Activated B cell treated with CpG ODN at 0.5 μM for 24 hours (primary cell): ENCODE measurements at regions of chr2 and their contacts with region 1.

Region 1: DNA sequence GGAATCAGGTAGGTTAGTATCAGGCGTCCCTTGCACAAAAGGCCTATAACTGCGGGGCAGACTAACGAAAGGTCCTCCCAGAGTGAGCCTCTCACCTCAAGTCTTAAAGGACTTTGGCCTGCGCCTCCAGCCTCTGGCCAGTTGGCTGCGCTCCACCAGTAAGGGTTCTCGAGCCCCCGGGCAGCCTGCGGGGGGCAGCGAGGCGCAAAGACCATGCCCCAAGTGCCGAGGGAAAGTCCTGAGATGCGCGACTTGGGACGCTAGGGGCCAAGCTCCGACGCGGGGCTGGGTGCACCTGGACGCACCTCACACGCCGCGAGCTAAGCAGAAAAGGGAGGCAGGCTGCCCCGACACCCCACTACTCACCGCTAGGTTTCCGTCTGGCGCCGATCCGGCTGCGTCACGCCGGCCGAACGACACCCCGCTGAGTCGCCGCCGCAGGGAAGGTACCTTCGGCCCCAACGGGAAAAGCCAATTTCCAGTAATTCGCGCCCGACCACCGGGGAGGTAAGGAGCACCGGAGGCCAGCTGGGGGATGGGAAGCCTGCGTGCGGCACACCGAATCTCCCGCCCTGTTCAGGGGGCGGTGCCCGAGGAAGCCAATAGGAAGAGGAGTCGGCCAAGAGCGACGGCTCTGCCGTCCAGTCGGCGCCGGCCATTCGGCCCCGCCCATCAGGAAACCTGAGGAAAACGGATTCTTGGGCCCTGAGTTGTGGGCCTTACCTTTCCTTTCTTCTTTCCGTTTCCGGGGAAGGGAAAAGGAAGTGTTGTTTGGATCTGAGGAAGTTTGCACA is at the start of gene ORC2:
- DNase-seq: peak; percentile 94
- ATAC-seq: peak; percentile 93
- H3K4me3 Mint-ChIP-seq: peak within 1 kb of the TSS; percentile 97
- H3K27ac Mint-ChIP-seq: peak within 1 kb of the TSS; percentile 97
- H3K4me1 Mint-ChIP-seq: peaks cover 63% of the 10 kb centered on the region
- H3K27me3 Mint-ChIP-seq: no peaks in the 10 kb centered on the region
- CTCF ChIP-seq: no peak
- total RNA-seq, gene ORC2: 36.8 and 38.1 TPM in 2 replicates

Region 2: DNA sequence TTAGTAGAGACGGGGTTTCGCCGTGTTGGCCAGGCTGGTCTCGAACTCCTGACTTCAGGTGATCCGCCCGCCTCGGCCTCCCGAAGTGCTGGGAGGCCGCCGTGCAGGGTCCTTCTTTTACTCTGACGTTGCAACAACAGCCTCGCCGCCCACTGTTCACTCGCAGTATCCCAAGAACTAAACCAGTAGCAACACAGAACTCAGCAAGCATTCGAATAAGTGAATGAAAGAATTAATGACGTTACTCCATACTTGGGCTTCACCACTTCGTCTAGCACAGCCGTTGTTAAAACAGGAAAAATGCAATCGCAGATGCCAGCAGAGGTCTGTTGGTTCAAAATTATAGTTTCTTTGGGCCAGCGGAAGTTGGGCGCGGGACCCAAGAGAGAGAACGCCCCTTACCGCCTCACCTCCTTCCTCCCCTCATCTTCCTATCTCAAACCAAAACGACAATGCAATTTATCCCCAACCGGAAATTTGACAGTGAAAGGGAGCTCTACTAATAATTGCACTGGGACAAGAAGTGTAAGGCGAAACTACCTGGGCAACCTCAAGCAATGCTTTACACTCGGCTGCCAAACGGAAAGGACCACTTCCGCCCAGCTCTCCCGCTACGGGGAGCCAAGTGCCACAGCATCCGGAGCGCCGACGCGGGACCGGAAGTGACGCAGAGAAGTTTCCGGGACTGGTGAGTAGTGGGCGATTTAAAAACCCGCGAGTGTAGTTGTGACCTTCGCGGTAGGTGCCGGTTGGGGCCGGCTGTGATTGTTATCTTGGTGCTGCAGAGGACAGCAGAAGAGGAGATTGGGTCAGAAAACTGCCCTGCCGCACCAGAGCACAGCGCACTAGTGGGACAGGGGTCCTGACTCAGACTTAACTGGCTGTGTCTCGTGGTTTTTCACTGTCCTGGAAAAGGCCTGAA is 74.4 kb before region 1 on chr2 and contains the starts of genes NIF3L1 and PPIL3:
- CTCF ChIA-PET with region 1: no interaction called
- POLR2A ChIA-PET with region 1: interaction called, 3 read pairs
- intact Hi-C with region 1: loop called (anchors 1 kb)
- DNase-seq: peak; percentile 90
- ATAC-seq: peak; percentile 80
- H3K4me3 Mint-ChIP-seq: peak within 1 kb of the TSS; percentile 99
- H3K27ac Mint-ChIP-seq: peak within 1 kb of the TSS; percentile 100
- H3K4me1 Mint-ChIP-seq: peaks cover 40% of the 10 kb centered on the region
- H3K27me3 Mint-ChIP-seq: no peaks in the 10 kb centered on the region
- CTCF ChIP-seq: no peak
- total RNA-seq, gene NIF3L1: 32.2 and 32.3 TPM in 2 replicates
- total RNA-seq, gene PPIL3: 43.5 and 52.5 TPM in 2 replicates

Region 3: GRCh38 chr2:200909958-200910357 is 53.4 kb before region 1 on chr2:
- CTCF ChIA-PET with region 1: interaction called, 3 read pairs
- POLR2A ChIA-PET with region 1: interaction called, 12 read pairs
- intact Hi-C with region 1: loop called (anchors 2 kb)
- DNase-seq: no peak
- ATAC-seq: no peak
- H3K4me3 Mint-ChIP-seq: no peak overlapping the region
- H3K27ac Mint-ChIP-seq: no peak overlapping the region
- H3K4me1 Mint-ChIP-seq: no peaks in the 10 kb centered on the region
- H3K27me3 Mint-ChIP-seq: no peaks in the 10 kb centered on the region
- CTCF ChIP-seq: no peak

Region 4: DNA sequence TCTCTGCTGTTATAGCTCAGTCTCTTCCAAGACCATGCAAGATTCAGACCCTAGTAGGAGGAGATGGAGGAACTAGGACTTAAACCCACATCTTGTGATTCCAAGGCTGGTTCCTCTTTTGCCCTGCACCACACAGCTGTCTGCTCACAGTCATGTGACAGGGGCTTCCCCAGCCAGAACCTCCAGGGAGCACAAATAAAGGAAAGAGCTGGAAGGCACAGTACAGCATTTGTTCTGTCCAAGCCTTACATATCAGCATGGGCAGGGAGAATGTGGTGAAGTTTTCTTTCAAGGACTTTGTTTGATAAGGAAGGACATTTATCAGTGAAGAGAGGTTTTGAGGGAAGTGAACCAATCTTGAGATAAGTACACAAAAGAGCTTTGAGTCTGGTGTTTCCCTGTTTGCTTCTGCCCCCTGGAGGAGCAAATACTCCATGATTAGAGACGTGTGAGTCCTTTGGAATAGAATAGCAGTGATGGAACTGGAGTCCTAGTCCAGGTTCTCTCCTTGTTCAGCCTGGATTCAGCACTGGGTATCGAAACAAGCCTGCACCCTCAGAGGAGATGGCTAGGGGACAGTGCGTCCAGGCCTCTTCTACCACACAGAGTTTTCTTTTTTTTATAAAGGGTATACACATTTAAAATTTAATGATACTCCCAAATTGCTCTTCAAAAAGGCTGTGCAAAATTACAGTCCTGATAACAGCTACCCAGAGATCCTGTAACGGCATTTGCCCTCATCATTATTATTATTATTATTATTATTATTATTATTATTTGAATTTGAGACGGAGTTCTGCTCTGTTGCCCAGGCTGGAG is 195.0 kb after region 1 on chr2:
- CTCF ChIA-PET with region 1: interaction called, 6 read pairs
- POLR2A ChIA-PET with region 1: interaction called, 9 read pairs
- intact Hi-C with region 1: loop called (anchors 1 kb)
- DNase-seq: peak; percentile 71
- ATAC-seq: peak; percentile 87
- H3K4me3 Mint-ChIP-seq: peak overlapping the region; percentile 73
- H3K27ac Mint-ChIP-seq: peak overlapping the region; percentile 95
- H3K4me1 Mint-ChIP-seq: peaks cover 56% of the 10 kb centered on the region
- H3K27me3 Mint-ChIP-seq: no peaks in the 10 kb centered on the region
- CTCF ChIP-seq: no peak

Region 5: DNA sequence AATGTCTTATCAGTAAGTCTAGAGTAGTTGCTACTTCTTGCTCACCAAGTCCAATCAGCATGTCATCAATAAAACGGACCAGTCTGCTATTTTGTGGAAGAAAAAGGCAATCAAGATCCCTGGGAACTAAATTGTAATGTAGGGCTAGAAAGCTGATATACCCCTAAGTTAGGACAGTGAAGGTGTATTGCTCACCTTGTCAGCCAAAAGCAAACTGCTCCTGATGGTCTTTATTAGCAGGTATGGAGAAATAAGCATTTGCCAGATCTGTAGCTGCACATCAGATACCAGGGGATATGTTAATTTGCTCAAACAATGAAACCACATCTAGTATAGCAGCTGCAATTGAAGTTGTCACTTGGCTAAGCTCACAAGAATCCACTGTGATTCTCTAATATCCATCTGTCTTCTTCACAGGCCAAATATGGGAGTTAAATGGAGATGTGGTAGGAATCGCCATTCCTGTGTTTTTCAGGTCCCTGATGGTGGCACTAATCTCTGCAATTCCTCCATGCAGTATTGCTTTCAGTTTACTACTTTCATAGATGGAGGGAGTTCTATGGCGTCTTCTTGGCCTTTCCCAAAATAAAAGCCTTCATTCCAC is 605.0 kb after region 1 on chr2:
- CTCF ChIA-PET with region 1: no interaction called
- POLR2A ChIA-PET with region 1: no interaction called
- intact Hi-C with region 1: no loop called
- DNase-seq: no peak
- ATAC-seq: no peak
- H3K4me3 Mint-ChIP-seq: no peak overlapping the region
- H3K27ac Mint-ChIP-seq: no peak overlapping the region
- H3K4me1 Mint-ChIP-seq: peaks cover 18% of the 10 kb centered on the region
- H3K27me3 Mint-ChIP-seq: no peaks in the 10 kb centered on the region
- CTCF ChIP-seq: no peak